AG04450 (cell line): ENCODE measurements at regions of chr7 and their contacts with region 1.

Region 1: DNA sequence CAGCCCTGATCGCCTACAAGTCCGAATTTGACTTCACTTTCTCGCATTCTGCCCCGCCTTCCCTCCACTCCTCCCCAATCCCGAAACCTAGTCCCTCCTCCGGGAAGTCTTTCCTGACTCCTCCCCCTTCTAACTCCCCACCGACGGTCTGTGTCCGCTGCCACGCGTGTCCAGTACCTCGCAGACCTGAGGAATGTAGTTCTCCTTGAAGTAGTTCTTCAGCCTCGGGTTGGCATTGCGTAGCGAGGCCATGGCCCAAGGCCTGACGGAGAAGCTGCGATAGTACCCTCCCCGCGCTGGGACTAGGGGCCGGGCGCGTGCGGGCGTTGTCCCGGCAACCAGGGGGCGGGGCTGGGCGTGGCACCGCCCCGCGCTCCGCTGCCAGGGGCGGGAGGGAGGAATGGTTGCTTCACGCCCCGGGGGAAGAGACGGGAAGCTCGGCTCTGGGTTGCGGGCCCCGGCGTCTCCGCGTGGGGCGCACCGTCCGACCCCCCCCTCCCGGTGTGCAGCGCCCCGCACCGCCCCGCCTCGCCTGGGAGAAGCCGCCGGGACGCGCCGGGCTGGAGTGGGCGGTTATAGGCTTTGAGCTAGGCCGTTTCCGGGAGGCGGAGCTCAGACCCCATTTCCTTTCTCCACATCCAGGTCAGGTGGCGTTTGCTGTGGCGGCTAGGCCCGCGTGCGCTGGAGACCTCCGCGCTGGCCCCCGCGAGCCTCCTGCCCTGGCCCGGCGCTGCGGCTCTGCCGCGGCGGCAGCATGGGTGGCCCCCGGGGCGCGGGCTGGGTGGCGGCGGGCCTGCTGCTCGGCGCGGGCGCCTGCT is at the starts of genes ARMC10 and FBXL13:
- DNase-seq: peak; percentile 72
- H3K4me3 ChIP-seq: peak within 1 kb of the TSS; percentile 93
- H3K27ac ChIP-seq: peak within 1 kb of the TSS; percentile 57
- H3K27me3 ChIP-seq: no peaks in the 10 kb centered on the region
- CTCF ChIP-seq: peak; percentile 25; the same call in 1 of the 2 replicates
- polyA plus RNA-seq, gene ARMC10: 39.1 and 54.9 TPM in 2 replicates
- polyA plus RNA-seq, gene FBXL13: 0.79 and 0.95 TPM in 2 replicates

Region 2: GRCh38 chr7:102220960-102221800 is 853.5 kb before region 1 on chr7:
- CTCF ChIA-PET with region 1: no interaction called
- POLR2A ChIA-PET with region 1: no interaction called
- DNase-seq: peak; percentile 26
- H3K4me3 ChIP-seq: peak overlapping the region; percentile 37
- H3K27ac ChIP-seq: peak overlapping the region; percentile 75
- H3K27me3 ChIP-seq: no peaks in the 10 kb centered on the region
- CTCF ChIP-seq: no peak

Region 3: DNA sequence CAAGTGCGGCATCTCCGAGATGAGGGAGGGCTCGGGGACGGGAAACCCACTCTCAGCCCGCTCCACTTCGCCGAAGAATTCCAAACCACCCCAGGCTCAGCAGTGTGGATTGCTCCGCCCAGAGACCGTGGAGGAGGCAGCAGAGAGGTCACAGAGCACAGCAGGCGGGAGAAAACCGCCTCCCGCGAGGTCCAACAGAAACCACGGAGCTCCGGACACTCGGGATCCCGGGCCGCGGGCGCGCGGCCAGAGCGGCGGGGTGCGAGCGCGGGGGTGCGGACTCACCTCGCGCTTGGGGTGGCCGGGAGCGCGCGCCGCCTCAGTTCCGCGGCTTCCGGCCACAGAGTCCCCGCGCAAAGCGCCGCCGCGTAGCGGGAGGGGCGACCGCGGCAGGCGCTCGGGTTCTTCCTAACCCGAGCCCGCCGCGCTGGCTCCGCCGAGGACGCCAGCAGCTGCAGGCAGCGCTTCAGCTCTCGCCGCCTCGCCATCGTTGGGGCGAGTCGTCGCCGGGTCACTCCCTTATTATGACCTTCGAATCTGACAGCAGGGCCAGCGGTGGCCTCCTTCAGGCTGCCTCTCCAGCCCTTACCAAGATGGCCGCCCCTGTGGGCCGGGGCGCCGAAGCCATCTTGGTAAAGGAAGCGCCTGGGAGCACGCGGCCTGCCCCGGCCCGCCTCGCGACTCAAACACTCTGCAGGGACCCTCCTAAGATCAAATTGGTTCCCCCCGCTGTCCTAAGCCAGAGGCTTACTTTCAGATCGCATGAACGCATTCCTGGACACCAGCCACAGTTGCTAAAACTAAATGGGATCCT is 74.5 kb after region 1 on chr7 and contains the start of gene NAPEPLD:
- CTCF ChIA-PET with region 1: no interaction called
- POLR2A ChIA-PET with region 1: interaction called, 11 read pairs
- DNase-seq: peak; percentile 71
- H3K4me3 ChIP-seq: peak within 1 kb of the TSS; percentile 83
- H3K27ac ChIP-seq: peak within 1 kb of the TSS; percentile 93
- H3K27me3 ChIP-seq: no peaks in the 10 kb centered on the region
- CTCF ChIP-seq: no peak
- polyA plus RNA-seq, gene NAPEPLD: 7.4 and 8.9 TPM in 2 replicates